Aorta (tissue), 5 donors: ENCODE measurements at regions of chr16 and their contacts with region 1.

Region 1: DNA sequence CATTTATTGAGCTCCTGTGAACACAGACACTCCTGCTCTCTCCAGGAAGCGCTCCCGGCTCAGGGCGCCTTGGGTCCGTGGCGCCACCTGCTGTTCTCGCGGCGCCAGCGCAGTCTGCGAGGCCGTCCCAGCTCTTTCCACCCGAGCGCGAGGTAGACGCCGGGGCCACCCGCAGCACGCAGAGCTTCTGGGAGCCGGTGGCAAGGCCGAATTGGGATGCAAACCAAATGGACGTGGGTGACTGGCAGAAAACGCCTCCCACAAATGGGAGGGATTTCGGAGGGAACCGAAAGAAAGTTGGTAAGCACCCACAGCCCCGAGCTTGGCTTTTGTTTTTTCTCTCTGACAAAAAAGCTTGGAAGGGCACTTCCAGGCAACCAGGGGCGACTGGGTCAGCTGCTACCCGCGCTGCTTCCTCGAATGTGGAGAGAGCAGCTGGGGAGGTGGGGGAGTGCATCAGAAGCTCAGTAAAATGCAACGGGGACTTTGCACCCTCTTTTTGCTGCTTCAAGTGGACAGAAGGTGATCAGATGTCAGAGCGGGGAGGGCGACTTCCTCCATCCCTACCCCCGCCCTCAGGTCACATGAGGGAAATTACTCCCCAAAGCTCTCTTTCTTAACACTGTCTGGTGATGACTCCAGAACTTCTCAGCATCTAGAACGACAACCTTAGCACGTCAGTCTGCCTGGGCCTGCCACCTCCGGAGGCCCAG is 13.5 kb upstream of the N4BP1 start:
- DNase-seq: peak; percentile 92 to 95
- ATAC-seq: peak; percentile 99
- H3K4me3 ChIP-seq: peak overlapping the region in 1 of 2 donors; percentile 45
- H3K27ac ChIP-seq: peak overlapping the region in 1 of 2 donors; percentile 4
- H3K4me1 ChIP-seq: no peaks in the 10 kb centered on the region
- H3K27me3 ChIP-seq: no peaks in the 10 kb centered on the region

Region 2: DNA sequence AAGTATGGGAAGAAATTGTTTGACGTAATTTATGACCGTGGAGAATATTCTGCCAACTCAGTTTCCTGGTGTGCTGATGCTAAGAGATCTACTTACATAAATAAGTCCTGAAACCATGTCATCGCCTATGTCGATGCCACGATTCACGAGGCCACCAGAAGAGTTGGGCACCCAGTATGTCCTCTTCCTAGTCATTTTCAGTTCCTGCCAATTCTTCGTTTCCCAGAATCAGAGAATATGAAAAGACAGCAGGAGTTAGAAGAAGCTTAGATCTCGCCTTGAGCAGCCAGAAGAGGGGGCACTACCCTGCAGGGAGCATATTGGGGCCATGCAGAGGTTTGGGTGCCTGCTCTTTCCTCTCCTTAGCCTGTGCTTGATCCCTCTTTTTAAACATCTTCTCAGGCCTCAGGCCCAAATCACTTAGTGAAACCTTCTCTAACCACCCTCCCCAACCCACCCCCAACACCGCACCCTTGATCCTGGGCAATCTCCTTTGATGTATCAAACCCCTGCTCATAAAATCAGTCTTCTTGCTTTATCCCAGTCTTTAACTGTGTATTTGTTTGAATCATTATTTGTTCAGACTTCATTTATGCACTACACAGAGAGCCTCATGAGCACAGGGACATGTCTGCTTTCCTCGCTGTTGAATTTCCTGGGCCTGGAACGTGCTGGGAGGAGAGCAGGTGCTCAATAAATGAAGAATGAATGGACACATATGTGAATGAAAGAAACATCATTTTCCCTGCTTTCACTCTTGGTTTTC is 391.6 kb before region 1 on chr16:
- intact Hi-C with region 1: loop called in 1 of 2 experiments (anchors 10 kb)
- DNase-seq: peak in 1 of 2 donors; percentile 54
- ATAC-seq: no peak
- H3K4me3 ChIP-seq: no peak overlapping the region
- H3K27ac ChIP-seq: no peak overlapping the region
- H3K4me1 ChIP-seq: no peaks in the 10 kb centered on the region
- H3K27me3 ChIP-seq: no peaks in the 10 kb centered on the region

Region 3: DNA sequence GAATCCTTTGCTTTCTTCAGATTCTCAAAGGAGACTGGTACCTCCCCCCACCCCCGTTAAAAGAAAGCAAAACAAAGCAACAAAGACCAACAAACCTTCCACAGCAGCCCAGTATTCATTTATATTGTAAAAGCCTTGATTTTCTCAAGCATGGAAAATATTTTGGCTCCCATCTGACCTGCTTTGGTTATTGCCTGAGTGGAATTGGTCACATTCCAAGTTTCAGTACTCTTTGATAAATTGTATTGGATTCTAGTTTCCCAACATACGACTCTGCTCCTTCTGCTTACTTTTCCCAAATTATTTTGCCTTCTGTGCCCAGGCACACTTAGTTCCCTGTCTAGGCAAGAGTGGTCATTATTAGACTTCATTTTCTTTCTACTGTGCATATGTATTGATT is 377.4 kb before region 1 on chr16:
- intact Hi-C with region 1: loop called in 1 of 2 experiments (anchors 5 kb)
- DNase-seq: no peak
- ATAC-seq: no peak
- H3K4me3 ChIP-seq: no peak overlapping the region
- H3K27ac ChIP-seq: no peak overlapping the region
- H3K4me1 ChIP-seq: peaks cover 3 to 5% of the 10 kb centered on the region in 2 donors
- H3K27me3 ChIP-seq: no peaks in the 10 kb centered on the region

Region 4: GRCh38 chr16:48353565-48354163 is 269.8 kb before region 1 on chr16:
- intact Hi-C with region 1: loop called (anchors 2 to 5 kb)
- DNase-seq: peak in 1 of 2 donors; percentile 60
- ATAC-seq: peak; percentile 87
- H3K4me3 ChIP-seq: no peak overlapping the region
- H3K27ac ChIP-seq: no peak overlapping the region
- H3K4me1 ChIP-seq: peaks cover 0 to 2% of the 10 kb centered on the region in 2 donors
- H3K27me3 ChIP-seq: no peaks in the 10 kb centered on the region